ENCODE measurements at regions of chr7 and their contacts with region 1.

Region 1: DNA sequence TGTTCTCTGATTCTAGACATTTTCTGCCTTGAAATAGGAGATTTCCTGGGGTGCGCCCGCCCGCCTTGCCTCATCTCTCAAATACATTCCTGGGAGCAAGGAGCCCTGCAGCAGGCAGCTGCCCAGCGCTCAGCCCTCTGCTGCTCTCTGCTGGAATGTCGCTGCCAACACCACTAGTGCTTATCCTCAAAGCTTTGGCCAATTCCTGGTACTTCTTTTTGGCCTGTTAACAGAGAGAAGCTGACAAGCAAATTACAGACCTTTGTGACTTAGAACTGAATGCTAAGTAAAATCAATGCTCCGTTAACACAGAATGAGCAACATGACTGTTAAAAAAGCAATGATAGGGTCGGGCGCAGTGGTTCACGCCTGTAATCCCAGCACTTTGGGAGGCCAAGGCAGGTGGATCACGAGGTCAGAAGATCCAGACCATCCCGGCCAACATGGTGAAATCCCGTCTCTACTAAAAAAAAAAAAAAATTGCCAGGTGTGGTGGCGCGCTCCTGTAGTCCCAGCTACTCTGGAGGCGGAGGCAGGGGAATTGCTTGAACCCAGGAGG is 41.9 kb upstream of the SYPL1 start:
- DNase-seq: peak; percentile 84
- ATAC-seq: peak; percentile 89
- H3K4me3 ChIP-seq: peak overlapping the region in 4 of 5 experiments; percentile 2 to 38 (median 32)
- H3K4me3 Mint-ChIP-seq: peak overlapping the region; percentile 84
- H3K27ac ChIP-seq: no peak overlapping the region
- H3K27ac Mint-ChIP-seq: peak overlapping the region; percentile 62
- H3K4me1 ChIP-seq: peaks cover 34 to 48% of the 10 kb centered on the region in 2 donors
- H3K4me1 Mint-ChIP-seq: peaks cover 48% of the 10 kb centered on the region
- H3K27me3 ChIP-seq: no peaks in the 10 kb centered on the region
- H3K27me3 Mint-ChIP-seq: no peaks in the 10 kb centered on the region
- CTCF ChIP-seq: peak; percentile 95

Region 2: GRCh38 chr7:105652359-105652993 is 501.5 kb before region 1 on chr7:
- CTCF ChIA-PET with region 1: interaction called, 4 read pairs
- POLR2A ChIA-PET with region 1: no interaction called
- intact Hi-C with region 1: loop called (anchors 5 kb)
- DNase-seq: peak; percentile 67
- ATAC-seq: peak; percentile 78
- H3K4me3 ChIP-seq: no peak overlapping the region
- H3K4me3 Mint-ChIP-seq: no peak overlapping the region
- H3K27ac ChIP-seq: no peak overlapping the region
- H3K27ac Mint-ChIP-seq: no peak overlapping the region
- H3K4me1 ChIP-seq: no peaks in the 10 kb centered on the region
- H3K4me1 Mint-ChIP-seq: peaks cover 1% of the 10 kb centered on the region
- H3K27me3 ChIP-seq: no peaks in the 10 kb centered on the region
- H3K27me3 Mint-ChIP-seq: no peaks in the 10 kb centered on the region
- CTCF ChIP-seq: peak; percentile 80

Region 3: GRCh38 chr7:106047818-106048705 is 105.9 kb before region 1 on chr7:
- CTCF ChIA-PET with region 1: interaction called, 390 read pairs
- POLR2A ChIA-PET with region 1: interaction called, 9 read pairs
- intact Hi-C with region 1: no loop called
- DNase-seq: no peak
- ATAC-seq: no peak
- H3K4me3 ChIP-seq: no peak overlapping the region
- H3K4me3 Mint-ChIP-seq: no peak overlapping the region
- H3K27ac ChIP-seq: no peak overlapping the region
- H3K27ac Mint-ChIP-seq: no peak overlapping the region
- H3K4me1 ChIP-seq: peaks cover 14 to 24% of the 10 kb centered on the region in 2 donors
- H3K4me1 Mint-ChIP-seq: peaks cover 31% of the 10 kb centered on the region
- H3K27me3 ChIP-seq: no peaks in the 10 kb centered on the region
- H3K27me3 Mint-ChIP-seq: no peaks in the 10 kb centered on the region
- CTCF ChIP-seq: no peak

Region 4: DNA sequence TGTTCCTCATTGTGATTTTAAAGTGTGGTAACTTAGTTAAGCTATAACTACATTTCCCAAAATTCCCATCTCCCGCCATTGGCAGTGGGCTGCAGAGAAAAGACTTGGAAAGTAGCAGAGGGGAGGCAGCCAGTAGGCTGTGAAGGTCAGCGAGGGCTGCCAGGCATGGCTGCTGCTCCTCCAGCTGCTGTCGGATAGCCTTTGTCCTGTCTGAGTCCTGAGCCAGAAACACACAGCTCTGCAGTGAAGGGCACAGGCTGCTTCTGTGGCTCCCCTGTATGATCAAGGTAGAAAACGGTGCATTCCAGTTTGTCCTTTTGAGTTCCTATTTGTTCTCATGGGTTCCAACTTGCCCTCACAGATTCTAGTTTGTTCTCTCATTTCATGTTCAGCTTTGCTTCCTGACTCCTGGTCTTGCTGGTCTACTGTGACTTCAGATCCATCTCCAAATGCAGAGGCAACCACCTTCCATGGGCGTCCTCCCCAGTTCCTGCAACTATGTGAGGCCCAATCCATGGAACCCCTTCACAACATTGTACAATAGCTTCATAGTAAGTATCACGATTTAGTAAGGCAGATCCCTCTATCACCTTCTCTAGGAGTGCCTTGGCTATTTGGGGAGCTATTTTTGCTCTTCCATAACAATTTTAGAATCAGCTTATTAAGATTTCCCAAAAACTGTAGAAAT is 73.5 kb before region 1 on chr7:
- CTCF ChIA-PET with region 1: interaction called, 84 read pairs
- POLR2A ChIA-PET with region 1: no interaction called
- intact Hi-C with region 1: no loop called
- DNase-seq: no peak
- ATAC-seq: no peak
- H3K4me3 ChIP-seq: no peak overlapping the region
- H3K4me3 Mint-ChIP-seq: peak overlapping the region; percentile 38
- H3K27ac ChIP-seq: peak overlapping the region in 1 of 2 donors; percentile 7
- H3K27ac Mint-ChIP-seq: peak overlapping the region; percentile 84
- H3K4me1 ChIP-seq: peaks cover 72 to 84% of the 10 kb centered on the region in 2 donors
- H3K4me1 Mint-ChIP-seq: peaks cover 77% of the 10 kb centered on the region
- H3K27me3 ChIP-seq: no peaks in the 10 kb centered on the region
- H3K27me3 Mint-ChIP-seq: no peaks in the 10 kb centered on the region
- CTCF ChIP-seq: no peak

Region 5: GRCh38 chr7:106112117-106112971 is 41.6 kb before region 1 on chr7 and contains the start of gene SYPL1:
- CTCF ChIA-PET with region 1: interaction called, 120 read pairs
- POLR2A ChIA-PET with region 1: interaction called, 4 read pairs
- intact Hi-C with region 1: loop called (anchors 1 kb)
- DNase-seq: peak; percentile 97
- ATAC-seq: peak; percentile 79
- H3K4me3 ChIP-seq: peak within 1 kb of the TSS; percentile 80 to 94 (median 81)
- H3K4me3 Mint-ChIP-seq: peak within 1 kb of the TSS; percentile 95
- H3K27ac ChIP-seq: peak within 1 kb of the TSS; percentile 91 to 95
- H3K27ac Mint-ChIP-seq: peak within 1 kb of the TSS; percentile 96
- H3K4me1 ChIP-seq: peaks cover 66 to 70% of the 10 kb centered on the region in 2 donors
- H3K4me1 Mint-ChIP-seq: peaks cover 74% of the 10 kb centered on the region
- H3K27me3 ChIP-seq: no peaks in the 10 kb centered on the region
- H3K27me3 Mint-ChIP-seq: no peaks in the 10 kb centered on the region
- CTCF ChIP-seq: no peak
- total RNA-seq, gene SYPL1: 126 and 130 TPM in 2 replicates

Region 6: DNA sequence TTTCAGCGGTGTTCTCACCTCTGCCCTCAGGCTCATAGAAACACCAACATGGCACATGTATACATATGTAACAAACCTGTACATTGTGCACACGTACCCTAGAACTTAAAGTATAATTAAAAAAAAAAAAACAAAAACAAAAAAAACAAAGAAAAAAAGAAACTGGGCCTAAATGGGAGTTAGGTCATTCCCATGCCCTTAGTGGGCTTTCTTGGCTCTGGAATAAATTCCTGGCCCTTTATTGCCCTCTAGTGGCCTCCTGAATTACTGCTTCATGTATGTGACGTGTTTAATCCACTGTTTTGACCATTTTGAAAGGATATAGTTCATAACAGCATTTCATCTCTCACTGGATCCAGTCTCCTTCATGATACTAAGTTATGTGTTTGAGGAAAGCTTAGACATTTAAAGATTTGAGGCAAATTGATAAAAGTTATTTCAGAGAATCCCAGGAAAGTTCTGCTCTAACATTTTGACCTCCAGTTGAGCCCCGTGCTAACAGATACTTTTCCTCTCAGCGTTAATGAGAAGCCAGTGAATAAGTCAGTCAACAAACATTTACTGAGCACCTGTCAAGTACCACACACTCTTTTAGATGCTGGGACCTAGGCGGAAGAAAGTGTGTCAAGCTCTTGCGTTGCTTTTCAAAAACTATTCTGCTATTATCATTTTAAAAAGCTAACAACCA is 12.8 kb after region 1 on chr7:
- CTCF ChIA-PET with region 1: interaction called, 159 read pairs
- POLR2A ChIA-PET with region 1: no interaction called
- intact Hi-C with region 1: loop called (anchors 1 kb)
- DNase-seq: peak; percentile 73
- ATAC-seq: peak; percentile 47
- H3K4me3 ChIP-seq: no peak overlapping the region
- H3K4me3 Mint-ChIP-seq: no peak overlapping the region
- H3K27ac ChIP-seq: no peak overlapping the region
- H3K27ac Mint-ChIP-seq: no peak overlapping the region
- H3K4me1 ChIP-seq: no peaks in the 10 kb centered on the region
- H3K4me1 Mint-ChIP-seq: peaks cover 10% of the 10 kb centered on the region
- H3K27me3 ChIP-seq: peaks cover 0 to 8% (median 0%) of the 10 kb centered on the region in 4 experiments
- H3K27me3 Mint-ChIP-seq: no peaks in the 10 kb centered on the region
- CTCF ChIP-seq: peak; percentile 95

Measured in B cell (primary cell).